ENCODE measurements at regions of chr4 and their contacts with region 1.

Region 1: GRCh38 chr4:112747036-112747435 is 110.1 kb downstream of the LARP7 start:
- DNase-seq: no peak
- ATAC-seq: no peak
- H3K4me3 ChIP-seq: no peak overlapping the region
- H3K27ac ChIP-seq: no peak overlapping the region
- H3K4me1 ChIP-seq: no peaks in the 10 kb centered on the region
- H3K27me3 ChIP-seq: no peaks in the 10 kb centered on the region
- CTCF ChIP-seq: no peak
- EP300 ChIP-seq: no peak
- POLR2A ChIP-seq: no peak
- RAD21 ChIP-seq: no peak

Region 2: GRCh38 chr4:112082954-112083586 is 664.0 kb before region 1 on chr4:
- CTCF ChIA-PET with region 1: no interaction called
- POLR2A ChIA-PET with region 1: no interaction called
- RAD21 ChIA-PET with region 1: no interaction called
- SMC1A ChIA-PET with region 1: no interaction called
- in situ Hi-C with region 1: loop called (anchors 10 kb)
- intact Hi-C with region 1: no loop called
- DNase-seq: no peak
- ATAC-seq: no peak
- H3K4me3 ChIP-seq: no peak overlapping the region
- H3K27ac ChIP-seq: no peak overlapping the region
- H3K4me1 ChIP-seq: 0 out of 2 replicates have a peak, but pooled peaks cover 4% of the 10 kb centered on the region
- H3K27me3 ChIP-seq: no peaks in the 10 kb centered on the region
- CTCF ChIP-seq: no peak
- EP300 ChIP-seq: no peak
- POLR2A ChIP-seq: no peak
- RAD21 ChIP-seq: no peak

Region 3: GRCh38 chr4:112735474-112735951 is 11.5 kb before region 1 on chr4:
- CTCF ChIA-PET with region 1: interaction called, 4 read pairs
- POLR2A ChIA-PET with region 1: interaction called, 4 read pairs
- RAD21 ChIA-PET with region 1: interaction called, 4 read pairs
- SMC1A ChIA-PET with region 1: interaction called, 13 read pairs
- in situ Hi-C with region 1: no loop called
- intact Hi-C with region 1: no loop called
- DNase-seq: peak; percentile 69
- ATAC-seq: peak; percentile 84
- H3K4me3 ChIP-seq: no peak overlapping the region
- H3K27ac ChIP-seq: peak overlapping the region; percentile 77; the same call in 1 of the 2 replicates
- H3K4me1 ChIP-seq: peaks cover 27% of the 10 kb centered on the region
- H3K27me3 ChIP-seq: no peaks in the 10 kb centered on the region
- CTCF ChIP-seq: no peak
- EP300 ChIP-seq: peak; percentile 82 to 92; a peak in 3 of 4 replicates
- POLR2A ChIP-seq: no peak
- RAD21 ChIP-seq: no peak

Region 4: GRCh38 chr4:112807083-112807482 is 60.0 kb after region 1 on chr4:
- CTCF ChIA-PET with region 1: no interaction called
- POLR2A ChIA-PET with region 1: no interaction called
- RAD21 ChIA-PET with region 1: no interaction called
- SMC1A ChIA-PET with region 1: no interaction called
- in situ Hi-C with region 1: no loop called
- intact Hi-C with region 1: no loop called
- DNase-seq: peak; percentile 28
- ATAC-seq: peak; percentile 94
- H3K4me3 ChIP-seq: no peak overlapping the region
- H3K27ac ChIP-seq: no peak overlapping the region
- H3K4me1 ChIP-seq: peaks cover 6% of the 10 kb centered on the region; the same call in 1 of the 2 replicates
- H3K27me3 ChIP-seq: no peaks in the 10 kb centered on the region
- CTCF ChIP-seq: no peak
- EP300 ChIP-seq: peak; percentile 31 to 48; a peak in 1 of 4 replicates
- POLR2A ChIP-seq: no peak
- RAD21 ChIP-seq: no peak

Region 5: DNA sequence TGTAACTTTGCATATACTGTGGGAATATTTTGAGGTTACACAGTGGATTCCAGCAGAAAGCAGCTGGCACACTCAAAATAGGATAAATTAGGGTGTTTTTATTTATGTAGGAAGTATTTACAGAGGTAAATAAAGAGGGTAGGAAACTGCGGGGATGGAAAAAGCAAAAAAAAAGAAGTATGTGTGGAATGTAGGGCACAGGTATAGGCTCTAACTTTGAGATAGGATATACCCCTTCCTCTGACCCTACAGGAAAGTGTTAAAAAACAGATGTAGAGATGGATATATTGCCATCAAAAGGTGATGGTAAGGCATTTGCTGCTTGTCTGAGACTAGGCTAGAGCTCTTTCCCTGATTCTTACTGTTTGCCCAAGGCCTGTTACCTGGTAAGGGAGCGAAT is 129.3 kb after region 1 on chr4:
- CTCF ChIA-PET with region 1: no interaction called
- POLR2A ChIA-PET with region 1: no interaction called
- RAD21 ChIA-PET with region 1: no interaction called
- SMC1A ChIA-PET with region 1: no interaction called
- in situ Hi-C with region 1: no loop called
- intact Hi-C with region 1: no loop called
- DNase-seq: no peak
- ATAC-seq: no peak
- H3K4me3 ChIP-seq: no peak overlapping the region
- H3K27ac ChIP-seq: no peak overlapping the region
- H3K4me1 ChIP-seq: no peaks in the 10 kb centered on the region
- H3K27me3 ChIP-seq: no peaks in the 10 kb centered on the region
- CTCF ChIP-seq: no peak
- EP300 ChIP-seq: no peak
- POLR2A ChIP-seq: no peak
- RAD21 ChIP-seq: no peak

Measured in GM12878 (cell line).